Cardiac septum (tissue), 1 donor: ENCODE measurements at regions of chr12 and their contacts with region 1.

Region 1: DNA sequence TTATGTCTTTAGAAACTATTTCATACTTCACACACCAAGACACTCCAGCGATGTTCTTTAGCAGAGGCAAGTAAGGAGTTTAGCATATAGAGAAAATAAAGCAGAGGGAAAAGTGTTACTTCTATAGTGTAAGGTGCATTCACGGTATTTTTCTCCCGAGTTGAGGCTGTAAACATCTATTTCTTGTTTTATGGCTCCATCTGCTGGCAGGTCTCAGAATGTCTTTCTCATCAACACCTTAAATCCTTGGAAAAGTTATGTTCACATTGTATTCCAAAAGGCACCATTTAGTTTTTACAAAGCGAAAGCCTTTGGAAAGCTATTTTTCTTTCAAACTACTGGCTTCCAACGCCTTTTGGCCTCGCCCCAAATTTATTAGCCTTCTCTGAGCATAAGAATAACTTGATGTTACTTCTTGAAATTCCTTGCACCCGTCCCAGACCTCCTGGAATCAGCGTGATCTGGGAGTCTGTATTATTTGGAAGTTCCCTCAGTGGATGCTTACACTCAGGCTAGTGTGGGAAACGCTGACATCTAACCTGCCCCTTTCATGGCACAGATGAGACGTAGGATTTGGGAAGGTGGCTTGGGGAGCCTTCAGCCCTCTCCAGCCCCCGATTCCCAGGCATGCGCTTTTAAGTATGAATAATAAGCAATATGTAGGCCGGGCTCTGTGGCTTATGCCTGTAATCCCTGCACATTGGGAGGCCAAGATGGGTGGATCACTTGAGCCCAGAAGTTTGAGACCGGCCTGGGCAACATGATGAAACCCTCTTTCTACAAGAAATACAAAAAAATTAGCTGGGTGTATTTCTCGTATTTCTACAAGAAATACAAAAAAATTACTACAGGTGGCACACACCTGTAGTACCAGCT is 1.9 kb upstream of the PIWIL1 start:
- DNase-seq: no peak

Region 2: DNA sequence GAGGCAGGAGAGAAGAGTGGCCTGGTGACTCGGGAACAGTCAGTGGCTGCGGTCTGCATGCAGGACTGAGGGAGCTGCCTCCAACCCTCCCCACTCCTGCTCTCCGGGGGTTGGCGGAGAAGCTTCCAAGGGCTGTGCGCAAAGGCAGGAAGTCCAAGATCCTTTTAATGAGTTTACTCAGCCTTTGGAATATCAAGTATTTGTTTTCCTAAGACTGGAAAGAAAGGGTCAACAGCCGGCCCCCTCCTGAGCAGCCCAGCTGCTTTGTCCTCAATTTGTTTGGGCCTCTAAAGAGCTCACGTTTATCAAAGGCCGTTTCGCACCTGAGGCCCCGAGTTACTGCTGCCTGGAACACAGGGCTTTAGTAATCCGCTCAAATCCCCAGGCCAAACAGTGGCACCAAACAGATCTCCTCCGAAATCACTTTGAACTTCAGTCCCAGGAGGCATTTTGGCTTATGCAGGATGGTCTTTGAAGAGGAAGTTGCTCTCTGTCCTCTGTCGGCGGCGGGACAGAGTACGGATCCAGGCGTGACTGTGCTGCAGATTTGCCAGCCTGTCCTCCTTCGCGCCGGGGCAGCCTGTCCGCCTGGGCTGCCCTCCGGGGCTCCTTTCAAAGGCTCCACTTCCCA is 290.6 kb before region 1 on chr12:
- intact Hi-C with region 1: loop called (anchors 2 kb)
- DNase-seq: peak; percentile 54

Region 3: DNA sequence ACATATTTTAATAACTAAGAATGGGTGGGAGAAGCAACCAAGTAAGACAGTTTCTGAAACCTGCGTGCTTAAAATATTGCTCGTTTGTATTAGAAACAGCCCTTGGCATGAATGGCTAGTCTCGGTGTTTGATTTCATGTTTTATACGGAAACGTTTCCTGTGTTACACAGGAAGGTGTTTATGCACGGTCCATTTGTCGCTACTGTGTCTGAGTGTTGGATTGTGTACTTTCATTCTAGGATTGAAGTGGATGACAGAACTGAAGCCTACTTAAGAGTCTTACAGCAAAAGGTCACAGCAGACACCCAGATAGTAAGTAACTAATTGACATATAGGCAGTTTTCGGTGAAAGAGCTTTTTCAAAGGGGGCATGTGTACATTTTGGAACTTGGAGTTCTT is 21.5 kb after region 1 on chr12:
- intact Hi-C with region 1: no loop called
- DNase-seq: no peak